Psoas muscle (tissue), 8 donors: ENCODE measurements at regions of chr20 and their contacts with region 1.

Region 1: DNA sequence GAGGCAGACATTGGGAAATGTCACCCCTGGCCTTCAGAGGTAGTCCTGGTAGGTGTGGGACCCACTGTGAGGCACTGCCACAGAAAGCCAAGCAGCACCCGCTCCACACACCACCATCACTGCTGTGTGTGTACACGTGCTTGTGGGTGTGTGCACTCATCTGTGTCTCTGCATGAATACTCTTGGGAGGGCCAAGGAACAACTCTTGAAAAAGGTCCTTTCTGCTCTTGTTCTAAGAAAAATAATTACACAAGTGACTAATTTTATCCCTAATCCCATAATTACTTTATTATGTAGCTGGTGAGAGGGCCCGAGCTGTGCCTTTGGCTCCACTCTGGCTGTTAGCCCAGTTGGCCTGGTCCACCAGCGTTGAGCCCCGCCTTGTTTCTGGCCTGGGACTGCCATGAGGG is 21.7 kb upstream of the EPB41L1 start:
- DNase-seq: no peak
- ATAC-seq: no peak
- H3K4me3 ChIP-seq: no peak overlapping the region
- H3K27ac ChIP-seq: no peak overlapping the region
- H3K4me1 ChIP-seq: no peaks in the 10 kb centered on the region
- H3K27me3 ChIP-seq: no peaks in the 10 kb centered on the region
- CTCF ChIP-seq: no peak

Region 2: GRCh38 chr20:35478804-35479472 is 653.9 kb before region 1 on chr20:
- intact Hi-C with region 1: no loop called
- DNase-seq: no peak
- ATAC-seq: no peak
- H3K4me3 ChIP-seq: no peak overlapping the region
- H3K27ac ChIP-seq: no peak overlapping the region
- H3K4me1 ChIP-seq: no peaks in the 10 kb centered on the region
- H3K27me3 ChIP-seq: no peaks in the 10 kb centered on the region
- CTCF ChIP-seq: no peak

Region 3: GRCh38 chr20:35690265-35690664 is 442.5 kb before region 1 on chr20:
- intact Hi-C with region 1: loop called in 1 of 2 experiments (anchors 5 kb)
- DNase-seq: no peak
- ATAC-seq: no peak
- H3K4me3 ChIP-seq: no peak overlapping the region
- H3K27ac ChIP-seq: no peak overlapping the region
- H3K4me1 ChIP-seq: no peaks in the 10 kb centered on the region
- H3K27me3 ChIP-seq: no peaks in the 10 kb centered on the region
- CTCF ChIP-seq: no peak

Region 4: DNA sequence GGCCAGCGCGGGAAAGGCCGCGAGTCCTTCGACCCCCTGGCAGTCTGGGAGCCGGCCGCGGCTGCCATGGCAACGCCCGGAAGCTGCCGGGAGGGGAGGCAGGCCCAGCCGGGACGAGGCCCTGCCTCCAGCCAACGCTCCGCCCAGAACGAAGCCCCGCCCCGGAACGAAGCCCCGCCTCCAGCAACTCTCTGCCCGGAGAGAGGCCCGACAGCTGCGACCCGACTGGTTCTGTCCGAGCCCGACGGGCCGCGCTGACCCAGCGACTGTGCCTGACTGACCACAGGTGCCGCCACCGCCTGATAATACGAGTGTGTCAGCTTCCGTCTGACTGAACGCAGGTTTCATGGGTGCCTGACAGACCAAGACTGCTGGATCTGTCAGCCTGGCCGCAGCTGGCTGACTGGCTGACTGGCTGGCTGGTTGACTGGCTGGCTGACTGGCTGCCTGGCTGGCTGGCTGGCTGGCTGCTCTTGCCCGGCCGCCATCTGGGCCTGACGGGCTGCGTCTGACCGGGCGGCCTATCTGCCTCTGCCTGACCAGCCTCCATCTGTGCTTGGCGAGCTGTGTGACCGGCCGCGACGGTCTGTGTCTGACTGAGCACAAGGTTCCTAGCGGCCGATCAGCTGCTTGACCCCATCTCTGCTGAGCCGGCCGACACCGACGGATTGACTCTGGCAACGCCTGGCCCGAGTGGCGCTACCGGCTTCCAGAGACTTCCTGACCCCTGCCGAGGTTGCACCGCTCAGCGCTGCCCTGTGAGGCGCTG is 68.0 kb before region 1 on chr20:
- intact Hi-C with region 1: loop called in 1 of 2 experiments (anchors 5 kb)
- DNase-seq: peak; percentile 94 to 98
- ATAC-seq: peak; percentile 97 to 98 (median 98)
- H3K4me3 ChIP-seq: peak overlapping the region; percentile 75
- H3K27ac ChIP-seq: peak overlapping the region; percentile 88
- H3K4me1 ChIP-seq: peaks cover 4% of the 10 kb centered on the region
- H3K27me3 ChIP-seq: no peaks in the 10 kb centered on the region
- CTCF ChIP-seq: no peak